ENCODE measurements at regions of chr7 and their contacts with region 1.

Region 1: GRCh38 chr7:148153616-148154284 is 436.8 kb upstream of the C7orf33 start:
- DNase-seq: peak; percentile 74 to 77
- ATAC-seq: peak; percentile 96 to 100 (median 98)
- H3K4me3 ChIP-seq: no peak overlapping the region
- H3K27ac ChIP-seq: peak overlapping the region in 3 of 10 donors; percentile 17 to 61 (median 33)
- H3K4me1 ChIP-seq: peaks cover 0 to 14% (median 9%) of the 10 kb centered on the region in 9 donors
- H3K27me3 ChIP-seq: peaks cover 0 to 12% (median 0%) of the 10 kb centered on the region in 7 donors
- CTCF ChIP-seq: no peak

Region 2: GRCh38 chr7:148104136-148104716 is 49.5 kb before region 1 on chr7:
- intact Hi-C with region 1: no loop called
- DNase-seq: no peak
- ATAC-seq: no peak
- H3K4me3 ChIP-seq: no peak overlapping the region
- H3K27ac ChIP-seq: no peak overlapping the region
- H3K4me1 ChIP-seq: peaks cover 0 to 6% (median 0%) of the 10 kb centered on the region in 9 donors
- H3K27me3 ChIP-seq: peaks cover 0 to 17% (median 3%) of the 10 kb centered on the region in 7 donors
- CTCF ChIP-seq: no peak

Region 3: DNA sequence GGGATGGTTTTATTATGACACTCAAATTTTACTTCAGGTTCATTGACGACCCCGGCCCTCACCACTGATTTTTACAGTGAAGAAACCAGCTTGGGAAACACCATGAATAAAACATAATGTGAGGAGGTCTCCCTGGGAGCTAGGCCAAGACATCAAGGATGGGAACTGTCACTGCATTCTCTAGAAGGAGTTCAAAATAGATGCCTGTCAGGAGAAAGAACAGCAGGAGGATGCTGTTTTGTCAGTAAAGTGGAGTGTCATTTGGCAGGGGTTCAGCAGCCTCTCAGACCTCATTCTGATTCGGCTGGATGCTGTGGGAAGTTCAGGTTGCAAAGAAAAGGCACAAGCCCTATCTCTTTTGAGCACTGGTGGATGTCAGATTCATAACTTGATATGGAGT is 76.5 kb after region 1 on chr7:
- intact Hi-C with region 1: loop called in 3 of 10 experiments (anchors 2 to 10 kb)
- DNase-seq: no peak
- ATAC-seq: no peak
- H3K4me3 ChIP-seq: no peak overlapping the region
- H3K27ac ChIP-seq: no peak overlapping the region
- H3K4me1 ChIP-seq: peaks cover 0 to 5% (median 0%) of the 10 kb centered on the region in 9 donors
- H3K27me3 ChIP-seq: peaks cover 0 to 28% (median 5%) of the 10 kb centered on the region in 7 donors
- CTCF ChIP-seq: no peak

Region 4: GRCh38 chr7:148242294-148242801 is 88.6 kb after region 1 on chr7:
- intact Hi-C with region 1: loop called in 1 of 10 experiments (anchors 10 kb)
- DNase-seq: peak in 1 of 2 donors; percentile 14
- ATAC-seq: peak in 7 of 8 donors; percentile 52 to 88 (median 71)
- H3K4me3 ChIP-seq: peak overlapping the region in 2 of 10 donors; percentile 12 to 16
- H3K27ac ChIP-seq: no peak overlapping the region
- H3K4me1 ChIP-seq: peaks cover 0 to 5% (median 0%) of the 10 kb centered on the region in 9 donors
- H3K27me3 ChIP-seq: peaks cover 0 to 61% (median 19%) of the 10 kb centered on the region in 7 donors
- CTCF ChIP-seq: peak; percentile 64 to 86 (median 81)

Measured in heart right ventricle (tissue), 16 donors.